ENCODE measurements at regions of chr2 and their contacts with region 1.

Region 1: DNA sequence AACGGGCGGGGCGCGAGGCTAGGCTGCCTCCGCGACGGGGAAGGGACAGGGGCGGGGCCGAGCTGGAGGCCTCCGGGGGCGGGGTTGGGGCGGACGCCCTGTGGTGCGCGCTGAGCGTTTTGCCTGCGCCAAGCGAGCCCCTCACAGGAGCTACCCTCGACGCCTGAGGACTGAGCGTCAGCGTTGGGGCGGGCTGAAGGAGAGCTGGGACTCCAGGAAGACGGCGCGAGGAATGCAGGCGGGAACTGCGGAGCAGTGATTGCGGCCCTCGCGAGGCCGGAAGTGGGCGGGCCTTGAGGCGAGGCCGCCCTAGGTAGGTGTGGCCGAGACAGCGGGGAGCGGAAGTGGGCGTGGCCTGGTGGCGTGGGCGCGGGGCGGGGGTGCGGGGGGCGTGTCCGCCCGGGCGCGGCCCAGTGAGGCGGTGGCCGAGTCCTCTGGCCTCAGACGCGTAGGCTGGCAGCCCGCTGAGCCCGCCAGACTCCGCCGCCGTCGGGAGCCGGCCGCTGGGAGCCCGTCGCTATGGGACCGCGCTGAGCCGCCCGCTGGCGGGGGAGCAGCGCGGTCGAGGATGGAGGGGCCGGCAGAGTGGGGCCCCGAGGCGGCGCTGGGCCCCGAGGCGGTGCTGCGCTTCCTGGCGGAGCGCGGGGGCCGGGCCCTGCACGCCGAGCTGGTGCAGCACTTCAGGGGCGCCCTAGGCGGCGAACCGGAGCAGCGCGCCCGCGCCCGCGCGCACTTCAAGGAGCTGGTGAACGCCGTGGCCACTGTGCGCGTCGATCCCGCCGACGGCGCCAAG is at the starts of genes SEPTIN10 and SOWAHC:
- DNase-seq: peak; percentile 98
- ATAC-seq: peak; percentile 88
- H3K4me3 ChIP-seq: peak within 1 kb of the TSS; percentile 78 to 100 (median 94)
- H3K27ac ChIP-seq: peak within 1 kb of the TSS; percentile 88
- H3K4me1 ChIP-seq: peaks cover 59% of the 10 kb centered on the region
- H3K27me3 ChIP-seq: no peaks in the 10 kb centered on the region; a peak in 1 of 5 replicates
- CTCF ChIP-seq: peak; percentile 25; the same call in 1 of the 2 replicates
- EP300 ChIP-seq: peak in 1 of 2 experiments; percentile 19; a peak in 1 of 4 replicates
- POLR2A ChIP-seq: peak in 1 of 2 experiments; percentile 90; a peak in 2 of 4 replicates
- RAD21 ChIP-seq: peak; percentile 86
- total RNA-seq, gene SEPTIN10: 67.5 and 99.8 TPM in 2 replicates
- total RNA-seq, gene SOWAHC: 22.5 and 24.7 TPM in 2 replicates

Region 2: DNA sequence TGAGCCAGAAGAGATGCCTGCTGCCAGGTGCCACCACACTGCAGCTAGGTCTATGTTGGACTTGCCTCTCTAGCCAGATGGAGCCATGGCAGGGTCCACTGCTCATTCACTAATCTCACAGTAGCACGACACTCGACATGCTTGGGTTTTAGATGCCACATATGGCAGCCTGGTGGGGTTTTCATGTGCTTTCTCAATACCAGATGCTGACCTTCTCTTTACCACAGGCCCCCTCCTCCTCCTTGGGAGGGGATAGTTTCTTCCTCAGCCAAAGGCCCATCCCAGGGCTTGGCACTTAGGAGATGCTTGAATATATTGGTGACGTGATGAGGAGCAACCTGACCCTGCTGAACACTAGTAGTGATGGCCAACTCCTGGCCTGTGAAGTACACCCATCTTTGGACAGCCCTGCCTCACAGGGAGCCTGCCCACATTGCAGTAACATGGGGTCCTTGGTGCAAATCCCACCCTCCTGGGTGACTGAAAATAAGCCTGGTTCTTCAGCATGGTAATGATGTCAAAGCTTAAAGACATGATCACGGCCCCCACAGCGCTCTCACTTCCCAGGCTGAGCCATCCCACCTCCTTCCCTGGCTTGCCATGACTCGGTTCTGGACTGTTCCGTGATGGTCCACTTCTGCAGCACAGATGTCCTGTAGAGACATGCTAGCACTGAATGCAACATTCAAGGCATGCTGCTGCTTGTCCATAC is 257.6 kb before region 1 on chr2:
- CTCF ChIA-PET with region 1: no interaction called
- POLR2A ChIA-PET with region 1: no interaction called
- in situ Hi-C with region 1: no loop called
- intact Hi-C with region 1: no loop called
- DNase-seq: no peak
- ATAC-seq: no peak
- H3K4me3 ChIP-seq: no peak overlapping the region
- H3K27ac ChIP-seq: no peak overlapping the region
- H3K4me1 ChIP-seq: no peaks in the 10 kb centered on the region
- H3K27me3 ChIP-seq: peaks cover 0 to 5% of the 10 kb centered on the region in 2 experiments; a peak in 2 of 5 replicates
- CTCF ChIP-seq: no peak
- EP300 ChIP-seq: no peak
- POLR2A ChIP-seq: no peak
- RAD21 ChIP-seq: no peak

Region 3: GRCh38 chr2:109510136-109511028 is 103.7 kb before region 1 on chr2:
- CTCF ChIA-PET with region 1: no interaction called
- POLR2A ChIA-PET with region 1: no interaction called
- in situ Hi-C with region 1: no loop called
- intact Hi-C with region 1: no loop called
- DNase-seq: peak; percentile 75
- ATAC-seq: peak; percentile 81
- H3K4me3 ChIP-seq: no peak overlapping the region
- H3K27ac ChIP-seq: no peak overlapping the region
- H3K4me1 ChIP-seq: peaks cover 5% of the 10 kb centered on the region; the same call in 1 of the 2 replicates
- H3K27me3 ChIP-seq: peaks cover 1 to 29% of the 10 kb centered on the region in 2 experiments; a peak in 3 of 5 replicates
- CTCF ChIP-seq: peak; percentile 97
- EP300 ChIP-seq: no peak
- POLR2A ChIP-seq: no peak
- RAD21 ChIP-seq: peak; percentile 86

Region 4: GRCh38 chr2:109545828-109546713 is 68.0 kb before region 1 on chr2:
- CTCF ChIA-PET with region 1: interaction called, 6 read pairs
- POLR2A ChIA-PET with region 1: interaction called, 11 read pairs
- in situ Hi-C with region 1: no loop called
- intact Hi-C with region 1: loop called (anchors 2 kb)
- DNase-seq: peak; percentile 63
- ATAC-seq: peak; percentile 91
- H3K4me3 ChIP-seq: no peak overlapping the region
- H3K27ac ChIP-seq: no peak overlapping the region
- H3K4me1 ChIP-seq: peaks cover 14% of the 10 kb centered on the region
- H3K27me3 ChIP-seq: no peaks in the 10 kb centered on the region
- CTCF ChIP-seq: peak; percentile 95
- EP300 ChIP-seq: 0 out of 4 replicates have a peak, but pooled peaks of 1 of the 2 experiments have one; percentile 8
- POLR2A ChIP-seq: no peak
- RAD21 ChIP-seq: peak; percentile 97

Region 5: GRCh38 chr2:109624339-109624738 is 10.2 kb after region 1 on chr2:
- CTCF ChIA-PET with region 1: interaction called, 5 read pairs
- POLR2A ChIA-PET with region 1: interaction called, 39 read pairs
- in situ Hi-C with region 1: no loop called
- intact Hi-C with region 1: no loop called
- DNase-seq: no peak
- ATAC-seq: peak; percentile 5; the same call in 2 of the 3 replicates
- H3K4me3 ChIP-seq: peak overlapping the region in 1 of 3 experiments; percentile 45; a peak in 1 of 6 replicates
- H3K27ac ChIP-seq: peak overlapping the region; percentile 33
- H3K4me1 ChIP-seq: peaks cover 48% of the 10 kb centered on the region
- H3K27me3 ChIP-seq: no peaks in the 10 kb centered on the region
- CTCF ChIP-seq: no peak
- EP300 ChIP-seq: no peak
- POLR2A ChIP-seq: no peak
- RAD21 ChIP-seq: no peak

Region 6: GRCh38 chr2:109637749-109638570 is 23.8 kb after region 1 on chr2:
- CTCF ChIA-PET with region 1: no interaction called
- POLR2A ChIA-PET with region 1: interaction called, 132 read pairs
- in situ Hi-C with region 1: no loop called
- intact Hi-C with region 1: no loop called
- DNase-seq: peak; percentile 74
- ATAC-seq: peak; percentile 83
- H3K4me3 ChIP-seq: peak overlapping the region; percentile 0 to 32 (median 20); a peak in 3 of 6 replicates
- H3K27ac ChIP-seq: peak overlapping the region; percentile 79
- H3K4me1 ChIP-seq: peaks cover 87% of the 10 kb centered on the region
- H3K27me3 ChIP-seq: no peaks in the 10 kb centered on the region
- CTCF ChIP-seq: 0 out of 2 replicates have a peak, but pooled peaks have one; percentile 2
- EP300 ChIP-seq: peak in 1 of 2 experiments; percentile 70; a peak in 2 of 4 replicates
- POLR2A ChIP-seq: no peak
- RAD21 ChIP-seq: no peak

Region 7: GRCh38 chr2:109663721-109664120 is 49.6 kb after region 1 on chr2:
- CTCF ChIA-PET with region 1: interaction called, 4 read pairs
- POLR2A ChIA-PET with region 1: interaction called, 21 read pairs
- in situ Hi-C with region 1: loop called (anchors 5 kb)
- intact Hi-C with region 1: loop called (anchors 2 kb)
- DNase-seq: peak; percentile 52
- ATAC-seq: peak; percentile 28
- H3K4me3 ChIP-seq: no peak overlapping the region
- H3K27ac ChIP-seq: no peak overlapping the region
- H3K4me1 ChIP-seq: peaks cover 50% of the 10 kb centered on the region
- H3K27me3 ChIP-seq: no peaks in the 10 kb centered on the region
- CTCF ChIP-seq: no peak
- EP300 ChIP-seq: no peak
- POLR2A ChIP-seq: no peak
- RAD21 ChIP-seq: no peak

Region 8: GRCh38 chr2:109690822-109691547 is 76.9 kb after region 1 on chr2:
- CTCF ChIA-PET with region 1: no interaction called
- POLR2A ChIA-PET with region 1: interaction called, 53 read pairs
- in situ Hi-C with region 1: no loop called
- intact Hi-C with region 1: no loop called
- DNase-seq: peak; percentile 96
- ATAC-seq: peak; percentile 95
- H3K4me3 ChIP-seq: peak overlapping the region; percentile 1 to 40 (median 3); a peak in 4 of 6 replicates
- H3K27ac ChIP-seq: peak overlapping the region; percentile 89
- H3K4me1 ChIP-seq: peaks cover 81% of the 10 kb centered on the region
- H3K27me3 ChIP-seq: no peaks in the 10 kb centered on the region
- CTCF ChIP-seq: no peak
- EP300 ChIP-seq: peak in 1 of 2 experiments; percentile 86; a peak in 2 of 4 replicates
- POLR2A ChIP-seq: peak; percentile 68 to 70; a peak in 3 of 4 replicates
- RAD21 ChIP-seq: peak; percentile 7; the same call in 1 of the 2 replicates

Region 9: DNA sequence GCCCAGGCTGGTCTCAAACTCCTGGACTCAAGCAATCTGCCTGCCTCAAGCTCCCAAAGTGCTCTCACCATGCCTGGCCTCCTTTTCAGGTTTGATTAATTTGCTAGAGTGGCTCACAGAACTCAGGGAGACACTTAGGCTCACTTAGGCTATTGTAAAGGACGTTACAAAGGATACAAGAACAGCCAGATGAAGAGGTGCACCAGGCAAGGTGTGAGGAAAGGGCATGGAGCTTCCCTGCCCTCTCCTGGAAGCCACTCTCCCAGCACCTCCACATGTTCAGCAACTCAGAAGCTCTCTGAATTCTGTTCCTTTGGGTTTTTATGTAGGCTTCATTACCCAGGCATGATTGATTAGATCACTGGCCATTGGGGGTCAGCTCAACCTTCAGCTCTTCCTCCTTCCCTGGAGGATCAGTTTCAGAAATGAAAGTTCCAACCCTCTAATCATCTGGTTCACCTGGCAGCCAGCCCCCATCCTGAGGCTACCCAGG is 101.2 kb after region 1 on chr2:
- CTCF ChIA-PET with region 1: interaction called, 10 read pairs
- POLR2A ChIA-PET with region 1: interaction called, 31 read pairs
- in situ Hi-C with region 1: no loop called
- intact Hi-C with region 1: loop called (anchors 1 kb)
- DNase-seq: peak; percentile 76
- ATAC-seq: peak; percentile 96
- H3K4me3 ChIP-seq: no peak overlapping the region
- H3K27ac ChIP-seq: no peak overlapping the region
- H3K4me1 ChIP-seq: peaks cover 40% of the 10 kb centered on the region
- H3K27me3 ChIP-seq: peaks cover 0 to 6% of the 10 kb centered on the region in 2 experiments; a peak in 4 of 5 replicates
- CTCF ChIP-seq: peak; percentile 98
- EP300 ChIP-seq: no peak
- POLR2A ChIP-seq: no peak
- RAD21 ChIP-seq: peak; percentile 96

Measured in HepG2 (cell line).